Esophagus muscularis mucosa (tissue), 4 donors: ENCODE measurements at regions of chr16 and their contacts with region 1.

Region 1: GRCh38 chr16:3400779-3401688 is at the starts of genes ZNF174 and ZSCAN32:
- DNase-seq: peak; percentile 99
- H3K4me3 ChIP-seq: peak within 1 kb of the TSS; percentile 67 to 96 (median 81)
- H3K27ac ChIP-seq: peak within 1 kb of the TSS; percentile 82 to 93 (median 86)
- H3K4me1 ChIP-seq: peaks cover 25 to 39% (median 35%) of the 10 kb centered on the region in 4 donors
- H3K27me3 ChIP-seq: no peaks in the 10 kb centered on the region
- CTCF ChIP-seq: peak in 1 of 3 experiments; percentile 45
- EP300 ChIP-seq: no peak
- POLR2A ChIP-seq: peak; percentile 39
- total RNA-seq, gene ZNF174: 8.9 to 23.2 (median 16.4) TPM
- total RNA-seq, gene ZSCAN32: 12.9 to 16.1 (median 15.2) TPM

Region 2: DNA sequence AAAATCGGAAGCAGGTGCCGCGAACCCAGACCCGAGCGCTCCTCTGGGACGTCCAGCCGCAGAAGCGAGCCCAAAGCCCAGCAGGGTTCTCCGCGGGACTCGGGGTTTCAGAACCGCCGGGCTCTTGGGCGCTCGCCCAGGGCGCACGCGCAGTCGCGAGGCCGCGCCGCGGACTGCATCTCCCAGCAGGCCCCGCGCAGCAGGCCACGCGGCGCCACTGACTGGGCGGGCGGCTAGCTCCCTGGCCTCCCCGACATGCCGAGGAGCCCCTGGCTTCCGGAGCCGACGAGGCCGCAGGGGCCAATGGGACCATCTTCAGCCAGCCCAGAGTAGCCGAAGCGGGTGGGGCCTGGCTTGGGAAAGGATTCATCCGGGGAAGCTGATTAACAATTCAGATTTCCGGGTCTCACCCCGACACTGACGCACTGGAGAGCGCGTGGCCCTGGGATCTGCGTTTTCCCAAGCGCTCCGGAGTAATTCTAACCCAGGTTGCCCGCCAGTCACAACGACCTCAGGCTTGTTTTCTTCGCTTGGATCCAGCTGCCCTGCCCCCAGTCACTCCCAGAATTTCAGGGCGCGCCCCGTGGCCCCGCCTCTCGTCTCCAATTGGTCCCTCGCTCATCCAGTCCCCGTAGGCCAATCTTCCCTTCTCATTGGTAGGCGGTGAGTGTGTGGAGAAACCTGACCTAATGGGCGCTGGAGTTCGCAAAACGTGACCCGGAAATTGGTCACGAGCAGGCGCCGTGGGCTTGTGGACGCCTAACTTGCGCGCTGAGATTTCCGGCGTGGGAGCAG is 118.1 kb before region 1 on chr16 and contains the start of gene ZNF263:
- intact Hi-C with region 1: loop called (anchors 5 kb)
- DNase-seq: peak; percentile 99
- H3K4me3 ChIP-seq: peak within 1 kb of the TSS; percentile 80 to 100 (median 99)
- H3K27ac ChIP-seq: peak within 1 kb of the TSS; percentile 95 to 100 (median 98)
- H3K4me1 ChIP-seq: peaks cover 21 to 36% (median 35%) of the 10 kb centered on the region in 4 donors
- H3K27me3 ChIP-seq: no peaks in the 10 kb centered on the region
- CTCF ChIP-seq: peak in 1 of 3 experiments; percentile 6
- EP300 ChIP-seq: no peak
- POLR2A ChIP-seq: peak; percentile 66
- total RNA-seq, gene ZNF263: 31.1 to 54.3 (median 42.8) TPM

Region 3: DNA sequence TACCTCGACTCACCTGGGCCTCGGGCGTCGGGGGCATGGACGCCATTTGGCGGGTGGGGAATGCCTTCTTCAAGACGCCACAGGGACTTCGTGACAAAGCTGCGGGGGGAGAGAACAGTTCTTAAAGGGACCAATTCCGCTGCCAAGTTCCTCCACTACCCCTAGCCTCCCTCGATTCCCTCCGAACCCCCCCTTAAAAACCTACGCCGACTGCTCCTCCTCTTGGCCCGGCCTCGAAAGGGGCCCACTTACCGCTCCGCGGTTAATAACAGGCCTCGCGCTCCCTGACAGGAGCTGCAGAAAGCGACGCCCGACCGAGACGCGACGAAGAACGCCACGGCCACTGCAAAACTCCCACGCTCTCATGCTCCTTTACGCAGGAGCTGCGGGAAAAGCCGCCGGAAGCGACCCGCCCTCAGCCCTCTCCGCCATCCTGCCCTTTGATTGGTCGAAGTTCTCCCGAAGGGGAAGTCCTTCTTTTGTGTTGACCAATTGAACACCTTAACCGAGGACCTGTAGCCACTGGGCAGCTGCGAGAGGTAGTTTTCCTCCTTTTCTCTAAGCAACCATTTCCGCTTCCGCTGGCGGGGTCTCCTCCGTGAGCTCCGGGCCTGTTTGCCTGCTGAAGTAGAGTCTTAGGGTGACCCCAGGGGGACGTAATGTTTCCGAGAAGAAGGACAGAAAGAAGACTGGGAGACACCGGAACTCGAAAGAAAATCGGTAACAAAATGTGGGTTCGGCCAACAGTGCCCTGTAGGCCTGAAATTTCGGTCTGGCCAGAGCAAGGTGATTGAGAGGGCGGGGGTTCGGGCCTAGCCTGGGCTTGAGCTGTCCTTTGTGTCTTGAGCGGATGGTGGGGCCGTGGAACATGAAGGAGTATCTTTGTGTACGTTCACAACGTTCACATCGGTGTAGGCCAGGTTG is 42.3 kb after region 1 on chr16 and contains the starts of genes NAA60 and ZNF597:
- intact Hi-C with region 1: loop called (anchors 5 kb)
- DNase-seq: peak; percentile 93
- H3K4me3 ChIP-seq: peak within 1 kb of the TSS; percentile 56 to 64 (median 60)
- H3K27ac ChIP-seq: peak within 1 kb of the TSS; percentile 63 to 78 (median 74)
- H3K4me1 ChIP-seq: peaks cover 6 to 19% (median 15%) of the 10 kb centered on the region in 4 donors
- H3K27me3 ChIP-seq: no peaks in the 10 kb centered on the region
- CTCF ChIP-seq: no peak
- EP300 ChIP-seq: no peak
- POLR2A ChIP-seq: no peak
- total RNA-seq, gene NAA60: 28.0 to 59.8 (median 47.8) TPM
- total RNA-seq, gene ZNF597: 1.5 to 2.2 (median 1.8) TPM

Region 4: DNA sequence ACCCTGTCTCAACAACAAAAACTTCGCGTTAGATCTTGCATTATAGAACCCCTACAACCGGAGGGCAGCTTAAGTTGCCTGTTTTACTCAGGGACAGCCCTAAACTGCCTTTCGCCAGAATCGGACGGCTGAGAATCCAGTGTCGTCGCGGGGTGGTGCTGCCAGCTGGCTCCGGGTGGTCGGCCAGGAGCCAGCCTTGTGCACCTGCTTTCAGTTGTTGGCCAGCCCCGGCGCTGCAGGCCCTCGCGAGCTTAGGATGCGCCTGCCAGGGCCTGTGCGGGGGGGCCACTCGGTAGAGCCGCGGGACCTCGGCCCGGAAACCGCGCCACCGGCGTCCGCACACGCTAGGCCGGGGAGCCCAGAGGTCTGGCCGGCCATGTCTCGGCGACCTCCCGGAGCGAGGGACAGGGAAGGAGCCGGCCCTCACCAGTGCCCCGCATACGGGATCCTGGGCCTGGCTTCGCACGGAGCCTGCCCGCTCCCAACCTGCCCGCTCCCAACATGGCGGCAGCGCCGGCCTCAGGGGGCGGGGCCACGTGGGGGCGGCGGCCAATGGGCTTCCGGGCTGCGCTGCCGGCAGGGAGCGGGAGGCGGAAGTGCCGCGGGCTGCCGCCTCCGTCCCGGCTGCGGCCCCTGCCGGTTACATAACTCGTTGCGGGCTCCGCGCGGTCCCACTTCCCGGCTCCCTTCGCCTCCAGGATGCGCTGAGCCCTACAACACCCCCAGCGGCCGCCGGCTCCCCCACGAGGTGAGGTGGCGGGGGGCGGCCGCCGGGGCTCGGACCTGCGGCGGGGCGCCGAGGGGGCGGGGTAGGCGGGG is 56.6 kb after region 1 on chr16:
- intact Hi-C with region 1: loop called (anchors 2 kb)
- DNase-seq: peak; percentile 94
- H3K4me3 ChIP-seq: peak overlapping the region; percentile 85 to 93 (median 92)
- H3K27ac ChIP-seq: peak overlapping the region; percentile 92 to 98 (median 95)
- H3K4me1 ChIP-seq: peaks cover 50 to 69% (median 66%) of the 10 kb centered on the region in 4 donors
- H3K27me3 ChIP-seq: no peaks in the 10 kb centered on the region
- CTCF ChIP-seq: peak; percentile 46 to 68 (median 56)
- EP300 ChIP-seq: no peak
- POLR2A ChIP-seq: peak; percentile 10

Region 5: GRCh38 chr16:3490911-3491629 is 90.0 kb after region 1 on chr16:
- intact Hi-C with region 1: loop called (anchors 10 kb)
- DNase-seq: no peak
- H3K4me3 ChIP-seq: no peak overlapping the region
- H3K27ac ChIP-seq: no peak overlapping the region
- H3K4me1 ChIP-seq: peaks cover 0 to 6% (median 5%) of the 10 kb centered on the region in 4 donors
- H3K27me3 ChIP-seq: no peaks in the 10 kb centered on the region
- CTCF ChIP-seq: no peak
- EP300 ChIP-seq: no peak
- POLR2A ChIP-seq: no peak